ENCODE measurements at regions of chr11 and their contacts with region 1.

Region 1: DNA sequence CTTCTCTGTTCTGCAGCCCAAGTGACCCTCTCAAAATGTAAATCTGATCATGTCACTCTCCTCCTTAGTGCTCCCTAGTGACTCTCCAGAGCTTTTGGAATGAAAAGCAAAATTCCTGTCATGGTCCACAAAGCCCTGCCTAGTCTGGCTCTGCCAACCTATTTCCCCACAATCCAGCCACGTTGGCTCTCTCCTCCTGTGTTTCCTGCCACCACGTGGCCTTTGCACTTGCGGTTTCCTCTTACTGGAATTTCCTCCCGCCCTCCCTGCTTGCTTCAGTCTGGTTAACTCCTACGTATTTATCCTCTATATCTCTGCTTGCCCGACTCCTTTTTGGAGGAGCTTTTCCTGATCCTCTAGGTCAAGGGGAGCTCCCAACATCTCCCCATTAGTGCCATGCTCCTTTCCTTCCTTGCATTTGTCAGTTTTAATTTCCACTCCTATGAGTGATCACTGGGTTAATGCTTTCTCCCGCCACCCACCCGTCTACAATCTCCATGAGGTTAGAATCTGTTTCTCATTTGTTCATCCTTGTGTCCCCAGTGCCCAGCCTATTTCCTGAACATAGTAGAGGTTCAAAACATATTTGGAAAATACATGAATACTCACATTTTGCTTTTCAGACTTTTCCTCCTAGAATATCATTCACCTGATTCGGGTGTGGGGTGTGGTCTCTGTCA is 11.5 kb downstream of the NNMT start:
- DNase-seq: peak; percentile 78
- H3K4me3 ChIP-seq: peak overlapping the region; percentile 19
- CTCF ChIP-seq: no peak

Region 2: DNA sequence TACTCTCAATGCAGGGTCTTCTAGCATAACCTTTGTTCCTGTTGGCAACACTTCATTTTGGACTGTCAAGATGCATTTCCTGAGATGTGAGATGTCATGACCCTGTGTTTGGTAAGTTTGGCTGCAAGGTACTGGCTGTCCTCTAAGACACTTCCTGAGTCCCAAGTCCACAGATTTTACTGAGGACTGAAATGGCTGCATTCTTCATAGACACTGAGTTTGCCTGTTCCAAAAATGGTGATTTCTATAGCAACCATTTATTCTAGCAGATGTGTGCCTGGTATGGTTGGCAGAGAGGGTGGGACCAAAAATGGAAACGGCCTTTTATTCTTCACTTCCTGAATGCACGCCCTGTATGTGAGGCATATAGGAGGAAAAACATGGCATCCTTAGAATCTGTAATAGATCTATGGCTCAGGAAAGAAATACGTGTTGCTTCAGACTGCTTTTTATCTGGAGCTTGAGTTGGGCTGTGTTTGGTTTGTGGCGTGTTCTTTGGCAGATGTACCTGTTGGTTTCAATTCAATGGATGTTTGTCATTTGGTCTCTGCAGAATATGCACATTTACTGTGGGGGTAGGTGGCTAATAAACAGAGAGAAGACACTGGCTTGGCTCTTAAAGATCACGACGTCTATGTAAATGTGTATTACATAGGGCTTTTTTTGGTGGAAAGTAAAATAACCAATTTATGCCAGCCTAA is 185.7 kb before region 1 on chr11:
- CTCF ChIA-PET with region 1: no interaction called
- POLR2A ChIA-PET with region 1: no interaction called
- DNase-seq: no peak
- H3K4me3 ChIP-seq: no peak overlapping the region
- CTCF ChIP-seq: no peak

Region 3: GRCh38 chr11:114295676-114296604 is 11.7 kb before region 1 on chr11 and contains the start of gene NNMT:
- CTCF ChIA-PET with region 1: interaction called, 4 read pairs
- POLR2A ChIA-PET with region 1: interaction called, 37 read pairs
- DNase-seq: peak; percentile 95
- H3K4me3 ChIP-seq: peak within 1 kb of the TSS; percentile 83
- CTCF ChIP-seq: peak; percentile 23

Region 4: DNA sequence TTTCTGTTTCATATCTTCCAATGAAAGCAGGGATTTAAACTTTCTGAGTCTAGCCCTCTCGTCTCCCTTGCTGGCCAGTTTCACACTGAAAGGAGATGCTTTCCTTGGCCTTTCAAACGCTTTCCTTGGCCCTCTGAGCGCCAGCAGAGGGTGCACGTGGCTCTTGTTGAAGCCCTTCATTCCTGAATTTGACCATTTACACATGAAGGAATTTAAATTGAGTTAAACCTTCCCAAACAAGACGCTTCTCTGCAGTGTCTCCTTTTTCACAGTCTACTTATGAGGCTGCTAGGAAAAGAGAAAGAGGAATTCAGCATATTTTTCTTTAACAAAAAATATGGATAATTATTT is 10.1 kb after region 1 on chr11:
- CTCF ChIA-PET with region 1: interaction called, 19 read pairs
- POLR2A ChIA-PET with region 1: interaction called, 3 read pairs
- DNase-seq: no peak
- H3K4me3 ChIP-seq: no peak overlapping the region
- CTCF ChIP-seq: peak; percentile 69

Region 5: DNA sequence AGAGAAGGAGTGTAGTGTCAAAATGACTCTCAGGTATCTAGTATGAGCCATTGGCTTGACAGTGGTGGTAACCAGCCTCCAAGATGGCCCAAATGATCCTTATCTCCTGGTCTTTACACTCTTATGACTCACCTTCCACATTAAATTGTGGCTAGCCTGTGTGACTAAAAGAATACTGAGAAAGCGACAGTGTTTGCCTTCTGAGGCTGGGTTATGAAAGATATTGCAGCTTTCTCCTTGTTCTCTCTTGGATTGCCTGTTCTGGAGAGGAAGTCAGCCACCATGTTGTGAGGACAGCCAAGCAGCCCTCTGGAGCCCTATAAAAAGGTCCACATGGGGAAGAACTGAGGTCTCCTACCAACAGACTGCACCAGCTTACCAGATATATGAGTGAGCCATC is 76.8 kb after region 1 on chr11:
- CTCF ChIA-PET with region 1: no interaction called
- POLR2A ChIA-PET with region 1: no interaction called
- DNase-seq: no peak
- H3K4me3 ChIP-seq: no peak overlapping the region
- CTCF ChIP-seq: no peak

Measured in AG04449 (cell line).